RWPE1 (cell line): ENCODE measurements at regions of chr9 and their contacts with region 1.

Region 1: DNA sequence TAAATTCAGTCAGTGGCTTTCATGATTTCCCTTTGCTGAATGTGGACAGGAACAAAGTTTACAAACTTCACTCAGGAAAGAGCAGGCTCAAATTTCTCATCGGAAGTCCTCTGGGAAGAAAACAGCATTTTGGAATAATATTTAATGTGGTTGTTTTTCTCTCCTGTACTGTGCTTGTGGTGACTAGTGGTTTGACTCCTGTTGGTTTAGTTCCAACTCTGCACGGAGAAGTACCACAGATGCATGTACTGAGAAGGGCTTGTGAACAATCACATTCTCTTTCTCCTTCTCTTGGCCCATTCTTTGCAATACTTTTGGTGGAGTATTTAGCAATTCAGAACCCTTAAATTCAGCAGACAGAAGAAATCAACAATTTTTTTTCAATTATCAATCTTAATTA is 13.3 kb downstream of the MPDZ start:
- DNase-seq: no peak
- H3K27ac ChIP-seq: no peak overlapping the region
- CTCF ChIP-seq: no peak

Region 2: GRCh38 chr9:12968093-12968492 is 298.1 kb before region 1 on chr9:
- CTCF ChIA-PET with region 1: interaction called, 10 read pairs
- POLR2A ChIA-PET with region 1: no interaction called
- DNase-seq: no peak
- H3K27ac ChIP-seq: no peak overlapping the region
- CTCF ChIP-seq: no peak

Region 3: GRCh38 chr9:13228431-13228830 is 37.7 kb before region 1 on chr9:
- CTCF ChIA-PET with region 1: no interaction called
- POLR2A ChIA-PET with region 1: no interaction called
- DNase-seq: no peak
- H3K27ac ChIP-seq: no peak overlapping the region
- CTCF ChIP-seq: no peak